ENCODE measurements at regions of chr4 and their contacts with region 1.

Region 1: GRCh38 chr4:187090401-187090800 is 366.7 kb upstream of the FAT1 start:
- DNase-seq: no peak
- H3K4me3 ChIP-seq: no peak overlapping the region
- H3K27ac ChIP-seq: no peak overlapping the region
- H3K4me1 ChIP-seq: no peaks in the 10 kb centered on the region
- H3K27me3 ChIP-seq: no peaks in the 10 kb centered on the region
- CTCF ChIP-seq: no peak

Region 2: GRCh38 chr4:187077744-187078401 is 12.5 kb before region 1 on chr4:
- CTCF ChIA-PET with region 1: interaction called, 10 read pairs
- POLR2A ChIA-PET with region 1: no interaction called
- intact Hi-C with region 1: no loop called
- DNase-seq: no peak
- H3K4me3 ChIP-seq: no peak overlapping the region
- H3K27ac ChIP-seq: no peak overlapping the region
- H3K4me1 ChIP-seq: no peaks in the 10 kb centered on the region
- H3K27me3 ChIP-seq: no peaks in the 10 kb centered on the region
- CTCF ChIP-seq: no peak

Measured in PC-9 (cell line).